GM10248 (cell line): ENCODE measurements at regions of chr6 and their contacts with region 1.

Region 1: DNA sequence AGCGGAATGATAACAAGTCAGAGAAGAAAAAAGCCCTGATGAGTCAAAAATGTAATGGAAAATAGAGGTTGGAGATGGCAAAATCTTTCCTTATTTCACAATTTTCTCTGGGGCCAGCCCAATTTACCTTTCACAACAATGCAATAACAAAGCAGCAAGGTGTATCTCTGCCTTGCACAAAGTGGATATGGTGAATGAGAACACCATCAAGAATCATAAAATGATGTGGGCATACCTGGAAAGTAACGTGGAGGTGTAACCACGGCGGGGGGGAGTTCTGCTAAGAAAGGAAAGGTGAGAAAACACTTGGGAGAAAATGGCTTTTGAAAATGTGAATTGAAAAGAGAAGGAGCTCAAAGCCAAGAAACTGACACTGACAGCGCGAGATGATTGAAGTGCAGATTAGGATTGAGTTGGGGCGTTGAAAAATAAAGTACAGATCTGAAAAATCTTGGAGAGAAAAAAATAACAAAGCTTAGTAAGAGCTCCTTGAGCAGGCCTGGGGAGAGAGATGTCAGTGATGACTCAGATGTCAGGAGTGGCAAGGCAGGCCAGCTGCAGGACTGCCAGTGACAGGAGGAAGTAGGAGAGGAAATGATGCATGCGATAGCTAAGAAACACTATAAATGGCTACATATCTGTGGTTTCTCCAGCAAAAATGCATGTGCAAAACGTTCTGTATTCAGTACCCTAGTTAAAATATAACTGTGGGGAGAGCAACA is 26.2 kb downstream of the ARHGAP18 start:
- DNase-seq: peak; percentile 86
- CTCF ChIP-seq: no peak

Region 2: DNA sequence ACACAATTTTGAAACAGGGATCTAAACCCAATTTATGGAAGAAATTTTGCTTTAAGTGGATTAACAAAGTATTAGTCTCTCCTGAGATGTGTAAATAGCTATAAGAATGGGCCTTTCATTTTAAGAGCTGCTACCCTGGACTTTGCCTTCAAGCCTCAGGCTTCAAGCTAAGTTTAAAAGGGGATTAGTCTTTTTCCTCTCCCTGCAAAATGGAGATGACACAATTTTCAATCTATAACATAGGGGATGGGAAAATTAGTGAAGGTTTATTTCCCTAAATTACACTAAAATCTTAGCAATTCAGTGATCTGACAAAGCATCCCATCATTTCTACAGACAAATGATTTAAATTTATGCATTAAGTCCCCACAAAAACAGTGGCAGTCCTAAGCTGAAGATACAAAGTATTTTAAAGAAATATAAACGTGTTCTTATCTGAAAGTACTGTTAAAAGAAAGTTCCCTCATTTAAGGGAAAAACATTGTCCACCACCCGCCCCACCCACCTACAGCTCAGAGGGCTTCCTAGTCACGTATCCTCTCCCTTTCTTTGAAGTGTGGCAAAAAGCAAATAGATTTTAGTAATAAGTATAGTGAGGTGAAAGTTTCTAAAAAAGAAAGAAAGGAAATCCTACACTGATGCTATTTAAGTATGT is 11.7 kb after region 1 on chr6:
- CTCF ChIA-PET with region 1: interaction called, 13 read pairs
- POLR2A ChIA-PET with region 1: no interaction called
- DNase-seq: no peak
- CTCF ChIP-seq: no peak

Region 3: DNA sequence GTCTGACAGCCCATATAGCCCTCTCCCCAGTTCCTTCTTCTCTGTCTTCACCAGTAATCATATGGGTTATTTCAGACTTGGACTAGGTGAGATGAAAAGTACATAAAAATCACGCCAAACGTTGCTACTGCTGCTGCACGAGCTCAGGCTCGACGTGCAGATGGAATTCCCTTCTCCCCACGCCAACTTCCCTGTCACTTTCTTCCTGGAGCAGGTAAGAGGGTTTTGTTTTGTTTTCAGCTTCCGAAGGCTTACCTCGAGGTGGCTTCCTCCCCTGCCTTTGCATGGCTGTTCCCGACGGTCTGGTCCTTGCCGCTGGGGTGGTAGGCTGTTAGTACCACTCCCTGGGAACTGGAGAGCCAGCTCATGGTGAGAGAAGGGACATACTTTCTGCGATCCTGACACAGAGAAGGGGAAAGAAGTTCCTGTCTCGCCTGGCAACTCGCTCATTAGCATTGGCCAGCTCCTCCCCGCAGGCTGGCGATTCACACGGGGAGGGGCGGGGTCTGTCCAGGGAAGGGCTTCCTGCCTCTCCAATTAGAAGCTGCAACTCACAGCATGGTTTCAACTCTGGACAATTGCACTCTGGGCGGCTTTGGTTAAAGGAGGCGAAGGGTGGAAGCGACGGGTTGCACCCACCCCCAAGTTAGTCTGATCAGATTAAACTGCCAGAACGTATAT is 26.1 kb after region 1 on chr6 and contains the start of gene ARHGAP18:
- CTCF ChIA-PET with region 1: interaction called, 15 read pairs
- POLR2A ChIA-PET with region 1: interaction called, 7 read pairs
- DNase-seq: peak; percentile 80
- CTCF ChIP-seq: no peak